Endothelial cell of umbilical vein (primary cell): ENCODE measurements at regions of chr16 and their contacts with region 1.

Region 1: GRCh38 chr16:81778861-81779535 is at the start of gene PLCG2:
- DNase-seq: peak; percentile 60
- H3K4me3 ChIP-seq: peak within 1 kb of the TSS; percentile 59 to 85 (median 70)
- H3K27ac ChIP-seq: no peak within 1 kb of the TSS
- H3K4me1 ChIP-seq: peaks cover 6% of the 10 kb centered on the region
- H3K27me3 ChIP-seq: peaks cover 5% of the 10 kb centered on the region in 2 experiments
- CTCF ChIP-seq: no peak
- POLR2A ChIP-seq: no peak
- total RNA-seq, gene PLCG2: 9.6 and 13.6 TPM in 2 replicates

Region 2: GRCh38 chr16:81755915-81756614 is 22.9 kb before region 1 on chr16:
- CTCF ChIA-PET with region 1: interaction called, 4 read pairs
- POLR2A ChIA-PET with region 1: no interaction called
- dilution Hi-C with region 1: no loop called
- intact Hi-C with region 1: loop called (anchors 2 kb)
- DNase-seq: peak; percentile 78
- H3K4me3 ChIP-seq: no peak overlapping the region
- H3K27ac ChIP-seq: peak overlapping the region; percentile 47
- H3K4me1 ChIP-seq: peaks cover 18% of the 10 kb centered on the region
- H3K27me3 ChIP-seq: no peaks in the 10 kb centered on the region
- CTCF ChIP-seq: peak in 1 of 2 donors; percentile 24
- POLR2A ChIP-seq: no peak

Region 3: GRCh38 chr16:81908466-81909227 is 129.6 kb after region 1 on chr16:
- CTCF ChIA-PET with region 1: no interaction called
- POLR2A ChIA-PET with region 1: interaction called, 12 read pairs
- dilution Hi-C with region 1: no loop called
- intact Hi-C with region 1: no loop called
- DNase-seq: no peak
- H3K4me3 ChIP-seq: no peak overlapping the region
- H3K27ac ChIP-seq: no peak overlapping the region
- H3K4me1 ChIP-seq: no peaks in the 10 kb centered on the region
- H3K27me3 ChIP-seq: no peaks in the 10 kb centered on the region
- CTCF ChIP-seq: no peak
- POLR2A ChIP-seq: no peak